ENCODE measurements at regions of chr22 and their contacts with region 1.

Region 1: DNA sequence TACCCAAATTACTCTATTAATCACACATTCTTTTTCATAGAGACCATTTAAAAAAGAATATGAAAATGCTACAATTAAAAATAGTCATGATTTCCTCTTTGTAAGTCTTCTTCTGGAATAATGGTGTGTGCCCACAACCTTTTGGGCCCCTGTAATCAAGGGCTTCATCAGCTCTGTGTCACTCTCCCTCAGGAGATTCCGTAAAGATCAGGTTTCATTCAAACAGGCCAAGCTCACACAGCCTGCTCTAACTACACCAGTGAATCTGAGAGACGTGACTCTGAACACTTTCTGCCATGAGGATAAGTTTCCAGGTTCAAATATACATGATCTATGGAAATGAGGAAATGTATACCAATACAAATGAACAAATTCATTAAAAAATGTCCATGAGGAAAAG is 9.5 kb downstream of the DRICH1 start:
- DNase-seq: peak; percentile 35
- ATAC-seq: peak; percentile 59; the same call in 1 of the 2 replicates
- H3K4me3 ChIP-seq: no peak overlapping the region
- H3K27ac ChIP-seq: no peak overlapping the region
- H3K4me1 ChIP-seq: no peaks in the 10 kb centered on the region
- H3K27me3 ChIP-seq: no peaks in the 10 kb centered on the region
- CTCF ChIP-seq: no peak
- POLR2A ChIP-seq: no peak
- RAD21 ChIP-seq: no peak

Region 2: DNA sequence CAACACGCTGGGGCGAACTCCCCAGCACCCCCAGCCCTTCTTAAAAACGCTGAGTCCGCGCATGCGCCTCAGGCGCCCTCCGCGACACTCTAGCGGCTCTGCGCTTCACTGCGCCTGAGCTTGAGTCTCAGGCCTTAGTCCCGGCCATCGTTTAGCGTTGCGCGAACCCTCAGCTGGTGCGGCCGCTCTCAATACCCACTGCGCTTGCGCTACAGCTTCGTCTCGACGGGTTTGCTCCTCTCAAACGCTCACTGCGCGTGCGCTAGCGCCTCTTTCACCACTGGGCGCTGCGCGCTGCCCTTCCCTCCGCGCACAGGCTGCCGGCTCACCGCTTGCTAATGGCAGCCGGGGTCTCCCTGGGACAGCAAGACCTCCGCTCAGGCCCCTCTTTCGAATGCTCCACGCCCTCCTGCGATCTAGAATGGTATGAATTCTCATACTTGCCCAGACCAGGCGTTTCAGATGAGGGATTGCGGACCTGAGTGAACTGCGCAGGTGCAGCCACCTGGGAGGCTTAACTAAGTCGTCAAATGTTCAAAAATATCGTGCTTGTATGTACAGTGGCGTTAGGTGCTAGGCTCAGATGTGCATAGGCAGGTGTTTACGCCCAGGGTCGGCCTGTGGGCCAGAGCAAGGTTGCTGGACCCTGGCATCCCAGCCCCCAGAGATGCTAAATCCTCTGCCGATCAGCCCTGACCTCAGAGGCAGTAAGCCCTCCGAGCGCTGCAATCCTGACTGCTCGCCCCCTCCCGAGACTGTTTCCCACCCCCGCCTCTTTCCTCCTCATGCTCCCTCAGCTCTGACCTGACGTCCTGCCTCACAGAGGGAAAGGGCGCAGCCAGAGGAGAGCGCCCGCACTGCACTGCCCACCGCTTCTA is 235.2 kb after region 1 on chr22 and contains the start of gene SLC2A11:
- CTCF ChIA-PET with region 1: no interaction called
- POLR2A ChIA-PET with region 1: no interaction called
- dilution Hi-C with region 1: no loop called
- in situ Hi-C with region 1: loop called (anchors 10 kb)
- intact Hi-C with region 1: no loop called
- DNase-seq: peak; percentile 97
- ATAC-seq: peak; percentile 96
- H3K4me3 ChIP-seq: peak within 1 kb of the TSS; percentile 55
- H3K27ac ChIP-seq: peak within 1 kb of the TSS; percentile 57
- H3K4me1 ChIP-seq: peaks cover 10% of the 10 kb centered on the region
- H3K27me3 ChIP-seq: no peaks in the 10 kb centered on the region
- CTCF ChIP-seq: peak; percentile 31; the same call in 1 of the 2 replicates
- POLR2A ChIP-seq: no peak
- RAD21 ChIP-seq: peak; percentile 20; the same call in 1 of the 2 replicates
- total RNA-seq, gene SLC2A11: 2.8 and 3.2 TPM in 2 replicates

Measured in IMR-90 (cell line).